ENCODE measurements at regions of chr1 and their contacts with region 1.

Region 1: GRCh38 chr1:93919780-93920179 is 10.6 kb upstream of the GCLM start:
- DNase-seq: no peak
- ATAC-seq: no peak
- H3K4me3 ChIP-seq: no peak overlapping the region
- H3K27ac ChIP-seq: no peak overlapping the region
- H3K4me1 ChIP-seq: peaks cover 12% of the 10 kb centered on the region
- H3K27me3 ChIP-seq: no peaks in the 10 kb centered on the region; a peak in 1 of 5 replicates
- CTCF ChIP-seq: no peak
- EP300 ChIP-seq: no peak
- POLR2A ChIP-seq: no peak
- RAD21 ChIP-seq: no peak

Region 2: DNA sequence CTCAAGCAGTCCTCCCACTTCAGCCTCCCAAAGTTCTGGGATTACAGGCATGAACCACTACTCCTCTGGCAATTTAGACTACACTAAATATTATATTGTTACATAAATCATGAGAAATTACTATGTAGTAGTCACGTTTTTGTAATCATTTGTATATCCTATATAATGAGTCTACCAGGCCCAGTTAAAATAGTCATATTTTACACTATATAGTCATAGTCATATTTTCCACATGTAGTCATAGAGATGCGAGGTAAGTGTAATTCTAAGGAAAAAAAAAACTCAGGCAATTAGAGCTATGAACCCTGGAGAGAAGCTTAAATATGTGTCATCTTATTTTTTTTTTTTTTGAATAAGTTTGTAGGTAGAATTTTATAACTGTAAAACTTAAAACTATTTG is 381.9 kb before region 1 on chr1:
- CTCF ChIA-PET with region 1: no interaction called
- POLR2A ChIA-PET with region 1: no interaction called
- in situ Hi-C with region 1: no loop called
- intact Hi-C with region 1: no loop called
- DNase-seq: no peak
- ATAC-seq: no peak
- H3K4me3 ChIP-seq: no peak overlapping the region
- H3K27ac ChIP-seq: no peak overlapping the region
- H3K4me1 ChIP-seq: no peaks in the 10 kb centered on the region
- H3K27me3 ChIP-seq: no peaks in the 10 kb centered on the region
- CTCF ChIP-seq: no peak
- EP300 ChIP-seq: no peak
- POLR2A ChIP-seq: no peak
- RAD21 ChIP-seq: no peak

Region 3: GRCh38 chr1:93899543-93900207 is 20.1 kb before region 1 on chr1:
- CTCF ChIA-PET with region 1: no interaction called
- POLR2A ChIA-PET with region 1: no interaction called
- in situ Hi-C with region 1: no loop called
- intact Hi-C with region 1: loop called (anchors 1 kb)
- DNase-seq: no peak
- ATAC-seq: no peak
- H3K4me3 ChIP-seq: no peak overlapping the region
- H3K27ac ChIP-seq: no peak overlapping the region
- H3K4me1 ChIP-seq: peaks cover 10% of the 10 kb centered on the region
- H3K27me3 ChIP-seq: no peaks in the 10 kb centered on the region
- CTCF ChIP-seq: no peak
- EP300 ChIP-seq: no peak
- POLR2A ChIP-seq: no peak
- RAD21 ChIP-seq: no peak

Region 4: DNA sequence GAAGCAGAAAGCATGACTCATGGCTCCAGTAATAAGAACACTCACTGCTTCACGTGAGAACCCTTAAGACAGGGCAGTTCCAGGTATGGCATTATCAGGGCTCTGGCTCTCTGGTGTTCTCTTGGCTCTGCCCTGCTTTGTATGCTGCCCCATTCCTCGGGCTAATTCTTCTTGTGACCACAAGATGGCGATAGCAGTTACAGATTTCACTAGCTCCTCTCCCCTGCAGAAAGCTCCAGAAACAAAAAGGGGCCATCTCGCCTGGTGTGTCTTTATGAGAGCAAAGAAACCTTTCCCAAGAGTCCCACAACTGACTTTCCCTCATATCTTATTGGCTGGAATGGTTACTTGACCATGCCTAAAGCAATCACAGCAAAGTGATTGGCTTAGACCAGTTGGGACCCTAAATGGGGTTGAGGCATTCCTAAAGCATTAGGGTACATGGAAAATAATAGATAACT is 561.7 kb after region 1 on chr1:
- CTCF ChIA-PET with region 1: no interaction called
- POLR2A ChIA-PET with region 1: no interaction called
- in situ Hi-C with region 1: no loop called
- intact Hi-C with region 1: no loop called
- DNase-seq: peak; percentile 62
- ATAC-seq: peak; percentile 95
- H3K4me3 ChIP-seq: no peak overlapping the region
- H3K27ac ChIP-seq: no peak overlapping the region
- H3K4me1 ChIP-seq: no peaks in the 10 kb centered on the region; the same call in 1 of the 2 replicates
- H3K27me3 ChIP-seq: no peaks in the 10 kb centered on the region
- CTCF ChIP-seq: peak; percentile 80
- EP300 ChIP-seq: no peak
- POLR2A ChIP-seq: no peak
- RAD21 ChIP-seq: 0 out of 2 replicates have a peak, but pooled peaks have one; percentile 35